AG04450 (cell line): ENCODE measurements at regions of chr14 and their contacts with region 1.

Region 1: GRCh38 chr14:67704484-67705089 is 2.9 kb downstream of the RDH12 start:
- DNase-seq: no peak
- H3K4me3 ChIP-seq: no peak overlapping the region
- H3K27ac ChIP-seq: no peak overlapping the region
- H3K27me3 ChIP-seq: peaks cover 4% of the 10 kb centered on the region
- CTCF ChIP-seq: peak; percentile 77

Region 2: GRCh38 chr14:66359500-66359899 is 1345.1 kb before region 1 on chr14:
- CTCF ChIA-PET with region 1: interaction called, 12 read pairs
- POLR2A ChIA-PET with region 1: no interaction called
- DNase-seq: peak; percentile 50
- H3K4me3 ChIP-seq: no peak overlapping the region
- H3K27ac ChIP-seq: no peak overlapping the region
- H3K27me3 ChIP-seq: no peaks in the 10 kb centered on the region
- CTCF ChIP-seq: peak; percentile 71

Region 3: GRCh38 chr14:67500981-67501380 is 203.6 kb before region 1 on chr14:
- CTCF ChIA-PET with region 1: no interaction called
- POLR2A ChIA-PET with region 1: no interaction called
- DNase-seq: no peak
- H3K4me3 ChIP-seq: no peak overlapping the region
- H3K27ac ChIP-seq: no peak overlapping the region
- H3K27me3 ChIP-seq: peaks cover 3% of the 10 kb centered on the region
- CTCF ChIP-seq: no peak

Region 4: DNA sequence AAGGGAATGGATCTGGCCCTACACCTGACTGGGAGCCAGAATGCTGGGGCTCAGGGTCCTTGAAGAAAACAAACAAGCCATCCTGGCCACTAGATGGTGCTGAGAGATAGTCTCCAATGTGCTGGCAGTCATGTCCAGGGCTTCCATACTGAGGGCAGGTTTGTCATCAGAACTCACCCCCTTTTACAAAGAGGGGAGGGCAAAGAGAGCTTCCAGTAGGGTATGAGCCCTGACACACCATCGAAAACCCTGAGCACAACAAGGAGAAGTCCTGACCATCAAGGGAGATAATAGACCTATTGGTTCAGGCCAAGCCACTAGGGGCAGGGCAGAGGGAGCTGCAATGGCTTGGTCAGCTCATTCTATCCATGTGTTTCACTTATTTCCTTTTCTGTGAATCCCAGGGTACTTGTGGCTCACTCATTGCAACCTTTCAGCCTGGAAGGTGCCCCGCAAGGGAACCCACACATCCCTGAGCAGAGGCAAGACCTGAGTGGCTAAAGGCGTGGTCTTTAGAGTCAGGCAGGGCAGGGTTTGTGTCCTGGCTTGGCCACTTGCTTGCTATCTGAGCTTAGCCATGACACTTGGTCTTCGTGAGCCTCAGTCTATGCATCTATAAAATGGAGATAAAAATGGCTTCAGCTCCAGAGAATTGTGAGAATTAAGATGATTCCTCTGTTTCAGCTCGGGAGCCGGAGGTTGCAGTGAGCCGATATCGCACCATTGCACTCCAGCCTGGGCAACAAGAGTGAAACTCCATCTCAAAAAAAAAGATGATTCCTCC is 177.7 kb before region 1 on chr14:
- CTCF ChIA-PET with region 1: interaction called, 42 read pairs
- POLR2A ChIA-PET with region 1: no interaction called
- DNase-seq: no peak
- H3K4me3 ChIP-seq: no peak overlapping the region
- H3K27ac ChIP-seq: no peak overlapping the region
- H3K27me3 ChIP-seq: peaks cover 38% of the 10 kb centered on the region
- CTCF ChIP-seq: peak; percentile 72

Region 5: GRCh38 chr14:67589204-67589770 is 115.3 kb before region 1 on chr14:
- CTCF ChIA-PET with region 1: interaction called, 208 read pairs
- POLR2A ChIA-PET with region 1: no interaction called
- DNase-seq: no peak
- H3K4me3 ChIP-seq: no peak overlapping the region
- H3K27ac ChIP-seq: no peak overlapping the region
- H3K27me3 ChIP-seq: no peaks in the 10 kb centered on the region
- CTCF ChIP-seq: no peak

Region 6: DNA sequence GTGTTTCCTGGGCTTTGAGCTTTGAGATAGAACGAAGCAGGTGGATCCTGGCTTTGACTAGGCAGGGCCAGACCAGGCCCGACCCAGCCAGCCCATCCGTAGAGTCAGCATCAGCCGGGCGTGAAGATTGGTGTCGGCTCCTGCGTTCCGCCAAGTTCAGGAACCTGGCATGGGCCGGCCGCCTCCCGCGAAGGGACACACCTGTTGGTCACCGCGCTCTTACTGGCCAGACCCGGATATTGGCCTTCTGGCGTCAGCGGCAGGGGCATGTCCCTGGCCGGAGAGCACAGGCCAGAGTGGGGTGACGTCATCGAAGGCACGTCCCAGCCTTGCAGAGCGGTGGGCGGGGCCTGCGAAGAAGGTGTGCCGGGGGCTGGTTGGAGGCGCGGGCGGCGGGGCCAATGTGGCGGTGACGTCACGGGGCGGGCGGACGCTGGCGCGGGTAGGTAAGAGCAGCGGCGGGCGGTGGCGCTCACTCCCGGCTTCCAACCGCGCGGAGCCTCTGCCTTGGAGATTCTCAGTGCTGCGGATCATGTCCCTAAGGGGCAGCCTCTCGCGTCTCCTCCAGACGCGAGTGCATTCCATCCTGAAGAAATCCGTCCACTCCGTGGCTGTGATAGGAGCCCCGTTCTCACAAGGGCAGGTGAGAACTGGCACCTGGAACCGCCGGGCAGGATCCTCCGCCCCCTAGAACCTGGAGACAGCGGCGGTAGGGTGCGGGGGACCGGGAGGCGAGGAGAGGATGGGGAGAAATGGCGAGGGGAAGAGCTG is 85.0 kb before region 1 on chr14 and contains the start of gene ARG2:
- CTCF ChIA-PET with region 1: interaction called, 162 read pairs
- POLR2A ChIA-PET with region 1: no interaction called
- DNase-seq: peak; percentile 61
- H3K4me3 ChIP-seq: peak within 1 kb of the TSS; percentile 67
- H3K27ac ChIP-seq: no peak within 1 kb of the TSS
- H3K27me3 ChIP-seq: no peaks in the 10 kb centered on the region
- CTCF ChIP-seq: no peak
- polyA plus RNA-seq, gene ARG2: 2.6 TPM in 2 replicates

Region 7: GRCh38 chr14:67674481-67675169 is 30.0 kb before region 1 on chr14 and contains the start of gene VTI1B:
- CTCF ChIA-PET with region 1: interaction called, 65 read pairs
- POLR2A ChIA-PET with region 1: no interaction called
- DNase-seq: no peak
- H3K4me3 ChIP-seq: peak within 1 kb of the TSS; percentile 86
- H3K27ac ChIP-seq: peak within 1 kb of the TSS; percentile 96
- H3K27me3 ChIP-seq: no peaks in the 10 kb centered on the region
- CTCF ChIP-seq: peak; percentile 42
- polyA plus RNA-seq, gene VTI1B: 110 and 127 TPM in 2 replicates

Region 8: GRCh38 chr14:67722293-67722692 is 17.7 kb after region 1 on chr14:
- CTCF ChIA-PET with region 1: interaction called, 15 read pairs
- POLR2A ChIA-PET with region 1: no interaction called
- DNase-seq: no peak
- H3K4me3 ChIP-seq: no peak overlapping the region
- H3K27ac ChIP-seq: no peak overlapping the region
- H3K27me3 ChIP-seq: peaks cover 50% of the 10 kb centered on the region
- CTCF ChIP-seq: no peak

Region 9: DNA sequence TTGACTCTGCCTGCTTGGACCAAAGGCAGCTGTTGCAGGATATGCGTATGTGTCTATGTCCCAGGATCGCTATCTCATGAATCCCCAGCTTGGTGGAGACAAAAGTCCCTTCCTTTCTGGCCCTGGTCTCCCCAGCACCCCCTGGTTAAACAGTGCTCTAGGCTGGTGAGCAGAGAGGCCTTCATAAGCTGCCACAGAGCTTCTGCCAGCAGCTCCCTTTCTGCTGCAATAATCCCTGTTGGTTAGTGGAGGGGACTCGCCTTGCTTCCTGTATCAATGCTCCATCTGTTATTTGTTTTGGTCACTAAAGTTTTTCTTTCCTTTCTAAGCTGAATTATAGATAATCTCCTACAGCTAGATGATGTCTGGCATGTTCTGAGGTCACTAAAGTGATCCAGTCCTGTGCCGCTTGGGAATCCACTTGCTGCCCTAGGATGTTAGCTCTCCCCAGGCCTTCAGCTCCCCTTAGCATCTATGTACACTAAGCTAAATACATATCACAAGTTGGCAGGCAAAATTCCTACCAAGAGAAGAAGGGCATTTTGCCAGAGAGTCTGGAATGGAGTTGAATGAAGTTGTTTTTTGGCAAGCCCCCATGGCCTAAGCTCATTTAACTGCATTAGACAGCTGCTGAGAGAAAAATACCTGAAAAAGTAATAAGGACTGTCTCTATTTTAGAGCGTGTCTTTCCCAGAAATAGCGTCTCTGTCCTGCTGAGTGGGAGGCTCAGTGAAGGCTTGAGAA is 44.9 kb after region 1 on chr14:
- CTCF ChIA-PET with region 1: no interaction called
- POLR2A ChIA-PET with region 1: no interaction called
- DNase-seq: no peak
- H3K4me3 ChIP-seq: no peak overlapping the region
- H3K27ac ChIP-seq: no peak overlapping the region
- H3K27me3 ChIP-seq: no peaks in the 10 kb centered on the region
- CTCF ChIP-seq: no peak

Region 10: GRCh38 chr14:67987606-67988005 is 283.0 kb after region 1 on chr14:
- CTCF ChIA-PET with region 1: no interaction called
- POLR2A ChIA-PET with region 1: no interaction called
- DNase-seq: peak; percentile 72
- H3K4me3 ChIP-seq: peak overlapping the region; percentile 20; the same call in 1 of the 2 replicates
- H3K27ac ChIP-seq: no peak overlapping the region
- H3K27me3 ChIP-seq: no peaks in the 10 kb centered on the region
- CTCF ChIP-seq: no peak

Region 11: GRCh38 chr14:68011406-68012028 is 306.9 kb after region 1 on chr14:
- CTCF ChIA-PET with region 1: no interaction called
- POLR2A ChIA-PET with region 1: no interaction called
- DNase-seq: no peak
- H3K4me3 ChIP-seq: no peak overlapping the region
- H3K27ac ChIP-seq: no peak overlapping the region
- H3K27me3 ChIP-seq: no peaks in the 10 kb centered on the region
- CTCF ChIP-seq: no peak